ENCODE measurements at regions of chr19 and their contacts with region 1.

Region 1: GRCh38 chr19:40633207-40633606 is 32.0 kb downstream of the LTBP4 start:
- DNase-seq: no peak
- ATAC-seq: no peak
- H3K4me3 Mint-ChIP-seq: no peak overlapping the region
- H3K27ac Mint-ChIP-seq: no peak overlapping the region
- H3K4me1 Mint-ChIP-seq: peaks cover 6% of the 10 kb centered on the region
- H3K27me3 Mint-ChIP-seq: peaks cover 14% of the 10 kb centered on the region

Region 2: GRCh38 chr19:40549007-40549708 is 84.0 kb before region 1 on chr19:
- CTCF ChIA-PET with region 1: interaction called, 22 read pairs
- POLR2A ChIA-PET with region 1: no interaction called
- DNase-seq: peak; percentile 77
- ATAC-seq: peak; percentile 92
- H3K4me3 Mint-ChIP-seq: no peak overlapping the region
- H3K27ac Mint-ChIP-seq: no peak overlapping the region
- H3K4me1 Mint-ChIP-seq: peaks cover 5% of the 10 kb centered on the region
- H3K27me3 Mint-ChIP-seq: peaks cover 47% of the 10 kb centered on the region

Region 3: DNA sequence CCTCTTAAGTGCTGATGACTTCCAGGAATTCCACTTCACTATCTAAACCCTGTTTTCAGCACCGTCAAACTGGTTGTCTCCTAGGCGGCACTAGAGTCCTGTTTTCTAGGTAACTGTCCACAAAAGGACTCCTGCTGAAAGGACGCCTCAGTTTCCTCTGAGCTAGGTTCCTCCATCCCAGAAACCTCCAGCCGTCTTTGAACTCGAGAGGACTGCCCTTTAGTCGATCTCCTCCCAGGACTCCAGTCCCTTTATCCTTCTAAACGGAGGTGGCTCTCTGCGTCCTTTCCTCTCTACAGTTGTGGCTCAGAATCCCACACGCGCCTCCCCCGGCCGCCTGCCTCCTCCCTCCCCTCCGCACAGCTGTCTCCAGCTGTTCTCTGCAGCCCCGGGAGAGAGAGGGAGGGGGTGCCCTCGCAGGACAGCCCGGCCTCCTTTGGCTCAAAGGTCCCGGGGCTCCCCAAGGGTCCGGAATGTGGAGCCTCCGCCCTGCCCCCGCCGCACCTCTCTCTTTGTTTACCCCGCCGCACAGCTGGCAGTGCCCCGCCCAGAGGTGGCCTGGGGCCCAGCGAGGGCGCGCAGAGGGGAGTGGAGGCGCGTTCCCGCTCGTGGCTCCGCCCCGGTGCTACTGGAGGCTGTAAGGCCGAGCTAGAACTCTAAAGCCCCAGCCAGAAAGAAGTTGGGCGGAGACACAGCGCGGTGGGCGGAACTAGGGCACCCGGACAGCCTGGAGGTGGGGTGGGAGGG is 29.6 kb before region 1 on chr19:
- CTCF ChIA-PET with region 1: interaction called, 58 read pairs
- POLR2A ChIA-PET with region 1: no interaction called
- DNase-seq: peak; percentile 99
- ATAC-seq: peak; percentile 79
- H3K4me3 Mint-ChIP-seq: peak overlapping the region; percentile 80
- H3K27ac Mint-ChIP-seq: peak overlapping the region; percentile 92
- H3K4me1 Mint-ChIP-seq: peaks cover 78% of the 10 kb centered on the region
- H3K27me3 Mint-ChIP-seq: peaks cover 33% of the 10 kb centered on the region

Region 4: DNA sequence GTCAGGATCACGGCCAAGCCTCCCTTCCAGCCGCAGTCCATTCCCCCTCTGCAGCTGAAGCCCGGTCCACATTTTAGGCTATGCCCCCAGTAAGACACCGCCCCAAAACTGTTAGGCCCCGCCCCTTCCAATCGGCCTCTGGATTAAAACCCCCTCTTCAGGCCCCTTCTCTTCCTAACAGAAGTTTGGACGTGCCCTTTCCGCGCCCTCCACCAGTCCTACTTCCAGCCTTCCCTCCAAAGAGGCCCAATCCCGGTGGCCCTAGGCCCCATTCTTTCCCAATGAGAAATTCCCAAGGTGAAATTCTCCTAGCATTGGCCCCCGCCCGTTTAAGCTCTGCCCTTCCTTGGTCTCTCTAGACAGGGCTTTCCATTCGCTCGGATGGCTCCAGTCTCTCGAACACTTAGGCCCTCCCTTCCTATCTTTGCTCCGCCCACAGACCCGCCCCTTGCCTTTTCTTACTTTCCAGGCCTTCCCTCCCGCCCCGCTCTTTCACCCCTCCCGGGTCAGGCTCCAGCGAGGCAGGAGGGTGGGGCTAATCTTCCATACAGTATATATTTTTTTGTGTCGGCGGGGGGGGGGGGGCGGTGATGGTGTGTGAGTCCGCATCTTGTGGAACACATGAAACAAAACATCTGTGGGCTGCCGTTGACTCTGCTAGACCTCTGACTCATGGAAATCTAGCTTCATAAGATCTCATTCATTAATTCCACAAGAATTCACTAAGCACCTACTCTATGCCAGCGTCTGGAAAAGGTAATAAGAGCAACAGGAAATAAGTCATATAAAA is 18.4 kb before region 1 on chr19:
- CTCF ChIA-PET with region 1: interaction called, 60 read pairs
- POLR2A ChIA-PET with region 1: no interaction called
- DNase-seq: peak; percentile 82
- ATAC-seq: peak; percentile 23
- H3K4me3 Mint-ChIP-seq: peak overlapping the region; percentile 90
- H3K27ac Mint-ChIP-seq: peak overlapping the region; percentile 94
- H3K4me1 Mint-ChIP-seq: peaks cover 48% of the 10 kb centered on the region
- H3K27me3 Mint-ChIP-seq: no peaks in the 10 kb centered on the region

Region 5: GRCh38 chr19:40650749-40651305 is 17.6 kb after region 1 on chr19:
- CTCF ChIA-PET with region 1: interaction called, 42 read pairs
- POLR2A ChIA-PET with region 1: no interaction called
- DNase-seq: no peak
- ATAC-seq: no peak
- H3K4me3 Mint-ChIP-seq: no peak overlapping the region
- H3K27ac Mint-ChIP-seq: no peak overlapping the region
- H3K4me1 Mint-ChIP-seq: no peaks in the 10 kb centered on the region
- H3K27me3 Mint-ChIP-seq: no peaks in the 10 kb centered on the region

Region 6: DNA sequence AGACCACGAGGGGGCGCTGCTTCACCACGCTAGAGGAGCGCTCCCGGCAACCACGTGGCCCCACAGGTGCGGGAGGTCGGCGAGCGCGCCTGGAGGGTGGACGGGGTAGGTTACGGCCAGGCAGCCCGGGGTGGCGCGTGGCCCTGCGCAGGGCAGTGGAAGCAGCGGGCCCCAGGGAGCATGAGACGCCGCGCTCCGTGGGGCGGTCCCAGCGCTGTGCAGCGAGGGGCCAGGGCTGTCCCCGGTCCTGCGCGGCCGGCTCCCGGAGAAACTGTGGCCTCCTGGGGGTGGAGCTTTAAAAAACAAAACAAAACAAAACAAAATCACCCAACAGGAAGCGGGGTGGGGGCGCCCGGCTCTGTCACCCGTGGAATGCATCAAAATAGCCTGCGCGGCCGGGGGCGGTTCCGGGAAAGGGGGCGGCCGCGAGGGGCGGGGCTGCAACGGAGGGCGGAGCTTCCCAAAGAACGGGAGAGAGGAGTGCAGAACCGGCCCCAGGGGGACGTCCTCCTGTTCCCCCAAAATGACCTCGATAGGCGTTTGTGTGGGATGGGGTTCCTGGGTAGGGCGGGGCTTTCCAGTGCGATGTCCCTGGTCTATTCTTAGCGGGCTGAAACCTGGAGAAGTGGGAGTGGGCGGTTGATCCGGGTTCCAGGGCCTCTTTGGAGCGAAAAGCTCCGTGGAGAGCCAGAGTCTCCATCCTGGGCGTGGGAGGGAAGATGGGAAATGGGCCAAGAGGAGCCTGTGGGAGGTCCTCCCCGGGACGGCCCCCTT is 29.9 kb after region 1 on chr19:
- CTCF ChIA-PET with region 1: interaction called, 16 read pairs
- POLR2A ChIA-PET with region 1: no interaction called
- DNase-seq: peak; percentile 92
- ATAC-seq: peak; percentile 96
- H3K4me3 Mint-ChIP-seq: peak overlapping the region; percentile 78
- H3K27ac Mint-ChIP-seq: peak overlapping the region; percentile 81
- H3K4me1 Mint-ChIP-seq: peaks cover 7% of the 10 kb centered on the region
- H3K27me3 Mint-ChIP-seq: peaks cover 6% of the 10 kb centered on the region

Region 7: GRCh38 chr19:40777937-40778705 is 144.9 kb after region 1 on chr19 and contains the start of gene RAB4B:
- CTCF ChIA-PET with region 1: interaction called, 11 read pairs
- POLR2A ChIA-PET with region 1: no interaction called
- DNase-seq: peak; percentile 100
- ATAC-seq: peak; percentile 87
- H3K4me3 Mint-ChIP-seq: peak within 1 kb of the TSS; percentile 91
- H3K27ac Mint-ChIP-seq: peak within 1 kb of the TSS; percentile 99
- H3K4me1 Mint-ChIP-seq: peaks cover 41% of the 10 kb centered on the region
- H3K27me3 Mint-ChIP-seq: no peaks in the 10 kb centered on the region
- total RNA-seq, gene RAB4B: 50.2 to 53.1 TPM